SK-N-SH (cell line): ENCODE measurements at regions of chr20 and their contacts with region 1.

Region 1: DNA sequence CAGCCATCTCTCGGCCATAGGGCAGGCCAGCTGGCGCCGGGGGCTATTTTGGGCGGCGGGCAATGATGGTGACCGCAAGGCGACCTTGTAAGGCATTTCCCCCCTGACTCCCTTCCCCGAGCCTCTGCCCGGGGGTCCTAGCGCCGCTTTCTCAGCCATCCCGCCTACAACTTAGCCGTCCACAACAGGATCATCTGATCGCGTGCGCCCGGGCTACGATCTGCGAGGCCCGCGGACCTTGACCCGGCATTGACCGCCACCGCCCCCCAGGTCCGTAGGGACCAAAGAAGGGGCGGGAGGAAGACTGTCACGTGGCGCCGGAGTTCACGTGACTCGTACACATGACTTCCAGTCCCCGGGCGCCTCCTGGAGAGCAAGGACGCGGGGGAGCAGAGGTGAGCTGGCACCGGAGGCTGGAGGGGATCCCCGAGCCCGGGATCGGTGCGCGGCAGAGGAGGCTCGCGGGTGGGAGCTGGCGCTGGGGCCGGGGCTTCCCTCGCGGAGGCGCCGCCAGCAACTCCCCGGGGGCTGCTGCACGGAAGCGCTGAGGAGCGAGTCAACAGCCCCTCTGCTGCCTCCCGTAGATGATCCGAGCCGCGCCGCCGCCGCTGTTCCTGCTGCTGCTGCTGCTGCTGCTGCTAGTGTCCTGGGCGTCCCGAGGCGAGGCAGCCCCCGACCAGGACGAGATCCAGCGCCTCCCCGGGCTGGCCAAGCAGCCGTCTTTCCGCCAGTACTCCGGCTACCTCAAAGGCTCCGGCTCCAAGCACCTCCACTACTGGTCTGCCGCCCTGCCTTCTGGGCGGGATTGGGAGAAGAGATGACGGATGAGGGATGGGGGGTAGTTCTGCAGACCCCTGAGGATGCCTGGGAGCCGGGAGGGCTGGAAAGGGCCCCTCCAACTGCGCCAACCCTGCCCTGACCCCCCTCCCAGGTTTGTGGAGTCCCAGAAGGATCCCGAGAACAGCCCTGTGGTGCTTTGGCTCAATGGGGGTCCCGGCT is at the starts of genes CTSA and NEURL2:
- DNase-seq: peak; percentile 99
- H3K4me3 ChIP-seq: peak within 1 kb of the TSS; percentile 78 to 90
- H3K27ac ChIP-seq: peak within 1 kb of the TSS; percentile 58 to 89
- H3K4me1 ChIP-seq: peaks cover 0 to 9% of the 10 kb centered on the region in 2 experiments; a peak in 2 of 4 replicates
- H3K27me3 ChIP-seq: no peaks in the 10 kb centered on the region
- CTCF ChIP-seq: no peak
- EP300 ChIP-seq: no peak
- RAD21 ChIP-seq: no peak
- polyA plus RNA-seq, gene CTSA: 338 and 363 TPM in 2 replicates
- polyA plus RNA-seq, gene NEURL2: 3.5 and 4.7 TPM in 2 replicates

Region 2: DNA sequence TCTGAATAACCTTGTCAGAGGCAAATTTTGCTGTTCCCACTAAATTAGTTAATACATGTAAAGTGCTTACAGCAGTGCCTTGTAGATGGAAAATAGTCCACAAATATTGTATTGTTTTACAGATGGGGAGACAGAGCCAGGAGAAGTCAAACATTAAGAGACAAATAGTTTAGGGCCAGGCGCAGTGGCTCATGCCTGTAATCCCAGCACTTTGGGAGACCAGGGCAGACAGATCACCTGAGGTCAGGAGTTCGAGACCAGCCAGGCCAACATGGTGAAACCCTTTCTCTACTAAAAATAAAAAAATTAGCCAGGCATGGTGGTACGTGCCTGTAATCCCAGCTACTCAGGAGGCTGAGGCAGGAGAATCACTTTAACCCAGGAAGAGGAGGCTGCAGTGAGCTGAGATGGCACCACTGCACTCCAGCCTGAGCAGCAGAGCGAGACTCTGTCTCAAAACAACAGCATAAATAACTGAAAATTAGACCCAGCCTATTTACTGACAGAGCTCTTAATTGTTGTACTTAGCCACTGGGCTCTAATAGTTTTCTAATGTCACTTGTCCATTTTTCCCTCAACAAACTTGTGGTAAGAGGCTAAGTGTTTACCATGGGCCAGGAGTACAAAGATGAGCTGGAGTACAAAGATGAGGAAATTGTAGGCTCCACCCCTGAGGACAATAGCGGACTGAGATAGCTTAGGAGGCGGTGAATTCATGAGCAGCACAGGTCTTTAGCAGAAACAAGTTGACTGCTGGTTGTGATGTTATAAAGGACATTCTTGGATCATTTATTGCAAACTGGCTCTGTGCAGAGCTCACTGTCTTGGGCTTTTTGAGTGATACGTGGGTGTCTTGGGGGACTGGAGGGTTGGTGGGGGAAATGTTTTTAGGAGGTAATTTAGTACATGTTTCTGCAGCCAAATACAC is 27.5 kb before region 1 on chr20:
- CTCF ChIA-PET with region 1: interaction called, 10 read pairs
- POLR2A ChIA-PET with region 1: no interaction called
- DNase-seq: no peak
- H3K4me3 ChIP-seq: no peak overlapping the region
- H3K27ac ChIP-seq: no peak overlapping the region
- H3K4me1 ChIP-seq: peaks cover 0 to 8% of the 10 kb centered on the region in 2 experiments; a peak in 1 of 4 replicates
- H3K27me3 ChIP-seq: no peaks in the 10 kb centered on the region
- CTCF ChIP-seq: no peak
- EP300 ChIP-seq: no peak
- RAD21 ChIP-seq: no peak

Region 3: GRCh38 chr20:45910670-45911485 is 19.6 kb after region 1 on chr20:
- CTCF ChIA-PET with region 1: interaction called, 13 read pairs
- POLR2A ChIA-PET with region 1: interaction called, 14 read pairs
- DNase-seq: peak; percentile 96
- H3K4me3 ChIP-seq: peak overlapping the region; percentile 60 to 72
- H3K27ac ChIP-seq: peak overlapping the region; percentile 81 to 91
- H3K4me1 ChIP-seq: peaks cover 7 to 8% of the 10 kb centered on the region in 2 experiments; a peak in 1 of 4 replicates
- H3K27me3 ChIP-seq: no peaks in the 10 kb centered on the region
- CTCF ChIP-seq: no peak
- EP300 ChIP-seq: no peak
- RAD21 ChIP-seq: no peak

Region 4: GRCh38 chr20:45934586-45935415 is 43.5 kb after region 1 on chr20 and contains the start of gene PCIF1:
- CTCF ChIA-PET with region 1: interaction called, 17 read pairs
- POLR2A ChIA-PET with region 1: interaction called, 21 read pairs
- DNase-seq: peak; percentile 98
- H3K4me3 ChIP-seq: peak within 1 kb of the TSS; percentile 85 to 89
- H3K27ac ChIP-seq: peak within 1 kb of the TSS; percentile 98
- H3K4me1 ChIP-seq: peaks cover 10 to 26% of the 10 kb centered on the region in 2 experiments; a peak in 3 of 4 replicates
- H3K27me3 ChIP-seq: no peaks in the 10 kb centered on the region
- CTCF ChIP-seq: no peak
- EP300 ChIP-seq: no peak
- RAD21 ChIP-seq: no peak
- polyA plus RNA-seq, gene PCIF1: 18.2 and 23.1 TPM in 2 replicates

Region 5: GRCh38 chr20:45971675-45972499 is 80.6 kb after region 1 on chr20 and contains the start of gene ZNF335:
- CTCF ChIA-PET with region 1: interaction called, 21 read pairs
- POLR2A ChIA-PET with region 1: interaction called, 6 read pairs
- DNase-seq: peak; percentile 99
- H3K4me3 ChIP-seq: peak within 1 kb of the TSS; percentile 74 to 89
- H3K27ac ChIP-seq: peak within 1 kb of the TSS; percentile 99 to 100
- H3K4me1 ChIP-seq: peaks cover 9 to 16% of the 10 kb centered on the region in 2 experiments; a peak in 2 of 4 replicates
- H3K27me3 ChIP-seq: no peaks in the 10 kb centered on the region
- CTCF ChIP-seq: peak; percentile 20
- EP300 ChIP-seq: peak in 1 of 2 experiments; percentile 44; a peak in 1 of 4 replicates
- RAD21 ChIP-seq: no peak
- polyA plus RNA-seq, gene ZNF335: 8.5 and 11.7 TPM in 2 replicates